Prostate gland (tissue), 2 donors: ENCODE measurements at regions of chr7 and their contacts with region 1.

Region 1: DNA sequence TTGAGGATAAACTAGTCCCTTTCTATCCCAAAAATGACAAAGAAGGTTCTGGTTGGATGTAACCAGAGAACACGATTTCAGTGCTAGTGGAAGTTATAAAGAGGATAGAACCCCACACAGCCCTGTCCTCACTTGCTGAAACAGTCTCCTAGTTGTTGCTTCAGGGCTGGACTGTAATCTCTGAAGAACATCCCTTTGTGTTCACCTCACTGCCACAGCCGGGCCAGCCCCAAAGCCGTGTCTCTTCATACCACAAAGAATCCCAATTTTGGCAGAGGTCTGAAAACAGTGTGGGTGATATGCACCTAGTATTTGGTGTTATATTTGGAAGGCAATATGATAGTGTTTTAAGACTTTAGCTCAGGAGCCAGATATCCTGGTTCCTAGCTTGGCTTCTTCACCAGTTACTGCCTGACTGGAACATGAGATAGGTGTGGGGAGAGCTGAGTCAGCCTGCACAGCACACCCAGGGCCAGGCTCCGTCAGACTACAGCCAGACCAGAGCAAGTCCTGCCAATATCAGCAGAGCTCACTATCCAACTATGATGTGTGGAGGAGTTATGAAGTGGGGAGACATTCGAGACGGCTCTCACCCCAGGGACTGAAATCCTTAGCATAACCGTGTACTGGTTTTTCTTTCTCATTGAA is 21.2 kb downstream of the CYP3A4 start:
- DNase-seq: peak; percentile 51
- H3K4me3 ChIP-seq: no peak overlapping the region
- H3K27ac ChIP-seq: no peak overlapping the region
- H3K4me1 ChIP-seq: no peaks in the 10 kb centered on the region
- H3K27me3 ChIP-seq: no peaks in the 10 kb centered on the region
- CTCF ChIP-seq: no peak
- POLR2A ChIP-seq: no peak

Region 2: DNA sequence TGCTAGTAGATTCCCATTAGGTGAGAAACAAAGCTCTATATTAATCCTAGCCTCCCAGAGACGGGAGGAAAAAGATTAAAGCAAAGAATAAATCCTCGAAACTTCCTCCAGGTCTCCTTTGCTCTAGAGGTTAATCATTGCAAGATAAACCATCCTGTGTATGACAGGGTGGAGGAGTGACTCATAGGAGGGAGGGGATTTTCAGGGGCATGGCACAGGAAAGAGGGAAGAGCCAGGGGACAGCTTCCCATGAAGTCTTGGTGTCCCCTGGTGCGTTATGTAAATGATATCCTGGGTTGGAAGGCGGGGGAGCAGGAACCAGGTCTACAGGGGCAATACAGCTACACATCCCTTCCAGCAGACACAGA is 83.8 kb before region 1 on chr7:
- intact Hi-C with region 1: loop called (anchors 2 kb)
- DNase-seq: peak; percentile 20
- H3K4me3 ChIP-seq: peak overlapping the region; percentile 26 to 33
- H3K27ac ChIP-seq: peak overlapping the region; percentile 56 to 65
- H3K4me1 ChIP-seq: no peaks in the 10 kb centered on the region
- H3K27me3 ChIP-seq: no peaks in the 10 kb centered on the region
- CTCF ChIP-seq: no peak
- POLR2A ChIP-seq: no peak

Region 3: GRCh38 chr7:99829524-99830160 is 66.8 kb after region 1 on chr7:
- intact Hi-C with region 1: loop called (anchors 10 kb)
- DNase-seq: no peak
- H3K4me3 ChIP-seq: no peak overlapping the region
- H3K27ac ChIP-seq: peak overlapping the region in 1 of 2 donors; percentile 62
- H3K4me1 ChIP-seq: peaks cover 6% of the 10 kb centered on the region
- H3K27me3 ChIP-seq: no peaks in the 10 kb centered on the region
- CTCF ChIP-seq: no peak
- POLR2A ChIP-seq: no peak

Region 4: GRCh38 chr7:99843808-99844207 is 81.0 kb after region 1 on chr7:
- intact Hi-C with region 1: no loop called
- DNase-seq: no peak
- H3K4me3 ChIP-seq: no peak overlapping the region
- H3K27ac ChIP-seq: no peak overlapping the region
- H3K4me1 ChIP-seq: no peaks in the 10 kb centered on the region
- H3K27me3 ChIP-seq: no peaks in the 10 kb centered on the region
- CTCF ChIP-seq: no peak
- POLR2A ChIP-seq: no peak

Region 5: GRCh38 chr7:99860281-99861127 is 97.7 kb after region 1 on chr7:
- intact Hi-C with region 1: loop called (anchors 10 kb)
- DNase-seq: peak; percentile 64
- H3K4me3 ChIP-seq: no peak overlapping the region
- H3K27ac ChIP-seq: peak overlapping the region; percentile 31 to 62
- H3K4me1 ChIP-seq: peaks cover 2% of the 10 kb centered on the region
- H3K27me3 ChIP-seq: no peaks in the 10 kb centered on the region
- CTCF ChIP-seq: no peak
- POLR2A ChIP-seq: no peak

Region 6: GRCh38 chr7:99928994-99929729 is 166.4 kb after region 1 on chr7 and contains the start of gene GJC3:
- intact Hi-C with region 1: no loop called
- DNase-seq: peak; percentile 61
- H3K4me3 ChIP-seq: peak within 1 kb of the TSS in 1 of 2 donors; percentile 16
- H3K27ac ChIP-seq: peak within 1 kb of the TSS; percentile 38 to 51
- H3K4me1 ChIP-seq: peaks cover 6% of the 10 kb centered on the region
- H3K27me3 ChIP-seq: no peaks in the 10 kb centered on the region
- CTCF ChIP-seq: peak in 3 of 4 experiments; percentile 45 to 71 (median 67)
- POLR2A ChIP-seq: no peak
- total RNA-seq, gene GJC3: 1.2 to 3.2 TPM